Breast epithelium (tissue), 4 donors: ENCODE measurements at regions of chr5 and their contacts with region 1.

Region 1: DNA sequence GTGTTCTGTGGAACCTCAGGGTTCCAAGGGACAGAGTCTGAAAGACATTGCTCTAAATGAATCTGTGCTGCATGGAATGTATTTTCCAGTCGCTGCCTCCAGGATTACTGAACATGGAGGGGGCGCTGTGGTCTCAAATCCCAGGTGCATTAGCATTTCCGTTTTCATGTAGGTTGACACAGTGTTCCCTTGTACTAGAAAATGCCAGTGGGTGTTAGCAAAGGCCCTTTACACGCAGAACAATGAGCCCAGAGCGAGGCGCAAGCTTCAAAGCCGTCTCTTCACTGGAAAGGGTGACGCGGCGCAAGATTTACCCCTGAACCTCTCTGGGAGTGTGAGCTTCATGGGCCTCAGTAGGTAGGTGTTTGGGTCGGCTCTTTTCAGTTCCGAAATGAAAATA is 308.2 kb downstream of the SLIT3 start:
- DNase-seq: peak in 1 of 2 donors; percentile 38
- H3K4me3 ChIP-seq: peak overlapping the region in 2 of 3 donors; percentile 23 to 50
- H3K27ac ChIP-seq: peak overlapping the region in 1 of 2 donors; percentile 32
- H3K4me1 ChIP-seq: no peaks in the 10 kb centered on the region
- H3K27me3 ChIP-seq: no peaks in the 10 kb centered on the region
- CTCF ChIP-seq: peak in 2 of 3 donors; percentile 11 to 34
- POLR2A ChIP-seq: no peak

Region 2: DNA sequence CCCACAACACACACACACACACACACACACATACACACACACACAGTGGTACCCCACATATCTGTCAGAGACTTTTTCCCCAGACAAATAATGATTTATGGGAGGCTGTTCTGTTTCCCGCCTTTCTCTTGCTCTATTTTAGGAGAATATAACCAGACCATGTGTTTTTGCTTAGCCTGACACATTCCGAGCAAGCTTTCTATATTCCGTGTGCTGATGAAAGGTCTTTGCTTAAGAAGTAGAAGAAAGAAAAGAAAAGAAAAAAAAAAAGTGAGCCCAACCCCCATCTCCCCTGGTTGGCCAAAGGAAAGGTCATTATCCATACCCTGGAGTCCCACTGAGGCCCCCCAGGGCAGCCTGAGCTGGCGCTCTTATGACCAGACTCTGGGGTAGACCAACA is 30.4 kb before region 1 on chr5:
- intact Hi-C with region 1: no loop called
- DNase-seq: no peak
- H3K4me3 ChIP-seq: no peak overlapping the region
- H3K27ac ChIP-seq: peak overlapping the region in 1 of 2 donors; percentile 55
- H3K4me1 ChIP-seq: no peaks in the 10 kb centered on the region
- H3K27me3 ChIP-seq: no peaks in the 10 kb centered on the region
- CTCF ChIP-seq: no peak
- POLR2A ChIP-seq: no peak

Region 3: GRCh38 chr5:169197343-169197742 is 204.6 kb after region 1 on chr5:
- intact Hi-C with region 1: loop called (anchors 10 kb)
- DNase-seq: peak in 1 of 2 donors; percentile 36
- H3K4me3 ChIP-seq: no peak overlapping the region
- H3K27ac ChIP-seq: no peak overlapping the region
- H3K4me1 ChIP-seq: no peaks in the 10 kb centered on the region
- H3K27me3 ChIP-seq: no peaks in the 10 kb centered on the region
- CTCF ChIP-seq: peak in 1 of 3 donors; percentile 54
- POLR2A ChIP-seq: no peak